Activated CD8-positive, alpha-beta T cell treated with anti-CD3 and anti-CD28 coated beads for 36 hours (primary cell): ENCODE measurements at regions of chr12 and their contacts with region 1.

Region 1: DNA sequence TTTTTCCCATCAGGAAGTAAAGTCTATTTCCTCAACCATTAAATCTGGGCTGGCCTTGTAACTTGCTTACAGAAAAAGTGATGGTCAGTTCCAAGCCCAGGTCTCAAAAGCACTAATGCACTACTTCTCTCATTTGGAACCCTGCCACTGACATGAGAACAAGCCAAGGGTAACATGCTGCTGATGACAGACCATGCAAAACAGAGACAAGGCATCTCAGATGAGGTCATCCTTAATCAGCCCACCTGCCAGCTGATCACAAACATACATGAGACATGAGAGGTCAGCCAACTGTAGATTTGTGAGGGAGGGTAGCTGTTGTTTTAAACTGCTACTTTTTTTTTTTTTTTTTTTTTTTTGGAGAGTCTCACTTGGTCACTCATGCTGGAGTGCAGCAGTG is 16.2 kb downstream of the TWF1 start:
- DNase-seq: no peak
- ATAC-seq: no peak
- H3K4me3 Mint-ChIP-seq: no peak overlapping the region
- H3K27ac Mint-ChIP-seq: no peak overlapping the region
- H3K4me1 Mint-ChIP-seq: no peaks in the 10 kb centered on the region
- H3K27me3 Mint-ChIP-seq: no peaks in the 10 kb centered on the region
- CTCF ChIP-seq: no peak

Region 2: DNA sequence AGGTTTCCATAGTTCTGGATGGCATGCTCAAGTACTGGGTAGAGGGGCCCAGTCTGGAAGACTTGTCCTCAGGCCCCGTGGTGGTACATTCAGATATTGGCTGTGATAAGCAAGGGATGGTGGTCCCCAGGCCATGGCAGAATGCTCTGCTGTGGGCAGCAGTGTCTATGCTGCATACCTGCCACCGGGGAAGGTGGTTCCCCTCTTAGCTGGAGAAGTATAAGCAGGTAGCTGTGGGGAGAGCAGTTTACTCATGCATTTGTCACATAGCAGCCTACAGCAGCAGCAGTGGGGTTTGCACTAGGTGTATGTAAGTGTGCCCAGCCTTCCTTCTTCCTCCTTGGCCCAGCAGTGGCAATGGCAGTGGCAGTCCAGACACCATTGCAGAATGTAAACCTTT is 168.7 kb before region 1 on chr12:
- CTCF ChIA-PET with region 1: no interaction called
- POLR2A ChIA-PET with region 1: no interaction called
- intact Hi-C with region 1: no loop called
- DNase-seq: no peak
- ATAC-seq: no peak
- H3K4me3 Mint-ChIP-seq: no peak overlapping the region
- H3K27ac Mint-ChIP-seq: no peak overlapping the region
- H3K4me1 Mint-ChIP-seq: no peaks in the 10 kb centered on the region
- H3K27me3 Mint-ChIP-seq: peaks cover 5% of the 10 kb centered on the region
- CTCF ChIP-seq: no peak

Region 3: DNA sequence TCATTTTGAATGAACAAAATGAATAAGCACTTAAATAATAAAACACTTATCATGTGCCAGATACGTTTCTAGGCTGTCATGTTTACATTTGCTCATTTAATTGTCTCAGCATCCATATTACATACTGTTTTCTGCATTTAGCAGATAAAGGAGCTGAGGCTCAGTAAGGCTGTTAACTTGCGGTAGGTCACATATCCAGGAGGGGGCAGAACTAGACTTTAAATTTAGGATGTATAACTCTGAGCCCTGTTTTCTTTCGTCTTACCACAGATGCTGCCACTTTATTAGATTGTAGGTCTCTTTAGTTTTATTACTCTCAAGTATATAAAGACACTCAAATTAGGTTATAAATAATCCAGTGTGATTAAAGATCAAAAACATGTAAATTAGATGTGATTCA is 13.4 kb before region 1 on chr12:
- CTCF ChIA-PET with region 1: interaction called, 12 read pairs
- POLR2A ChIA-PET with region 1: no interaction called
- intact Hi-C with region 1: no loop called
- DNase-seq: peak; percentile 27
- ATAC-seq: peak; percentile 55
- H3K4me3 Mint-ChIP-seq: no peak overlapping the region
- H3K27ac Mint-ChIP-seq: no peak overlapping the region
- H3K4me1 Mint-ChIP-seq: no peaks in the 10 kb centered on the region
- H3K27me3 Mint-ChIP-seq: no peaks in the 10 kb centered on the region
- CTCF ChIP-seq: peak; percentile 42